ENCODE measurements at regions of chr14 and their contacts with region 1.

Region 1: GRCh38 chr14:99415496-99416281 is 65.0 kb downstream of the SETD3 start:
- DNase-seq: peak; percentile 77
- CTCF ChIP-seq: peak; percentile 80

Region 2: DNA sequence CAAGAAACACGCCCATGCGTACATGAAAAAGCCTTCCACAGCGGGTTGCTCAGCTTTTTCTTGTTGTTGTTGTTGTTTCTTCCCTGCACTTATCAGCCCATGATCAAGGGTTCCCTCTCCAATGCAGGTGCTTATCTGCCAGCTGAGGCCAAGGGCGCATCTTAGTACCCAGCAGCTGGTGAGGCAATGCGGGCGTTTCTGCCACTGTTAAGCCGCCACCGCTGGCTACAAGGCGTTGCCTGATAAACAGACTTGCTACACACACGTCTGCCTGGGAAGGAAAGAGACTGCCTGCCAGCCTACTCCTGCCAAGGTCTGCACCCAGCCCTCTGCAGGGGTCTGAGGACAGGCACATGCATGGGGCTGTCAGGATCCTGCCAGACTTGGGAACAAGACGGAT is 489.5 kb before region 1 on chr14:
- CTCF ChIA-PET with region 1: no interaction called
- POLR2A ChIA-PET with region 1: no interaction called
- DNase-seq: no peak
- CTCF ChIP-seq: no peak

Region 3: GRCh38 chr14:99320105-99320572 is 95.5 kb before region 1 on chr14:
- CTCF ChIA-PET with region 1: interaction called, 43 read pairs
- POLR2A ChIA-PET with region 1: no interaction called
- DNase-seq: peak; percentile 78
- CTCF ChIP-seq: peak; percentile 74

Region 4: GRCh38 chr14:99348816-99349614 is 66.7 kb before region 1 on chr14:
- CTCF ChIA-PET with region 1: no interaction called
- POLR2A ChIA-PET with region 1: no interaction called
- DNase-seq: no peak
- CTCF ChIP-seq: no peak

Region 5: GRCh38 chr14:99393047-99393655 is 22.5 kb before region 1 on chr14:
- CTCF ChIA-PET with region 1: interaction called, 285 read pairs
- POLR2A ChIA-PET with region 1: no interaction called
- DNase-seq: peak; percentile 67
- CTCF ChIP-seq: peak; percentile 67

Region 6: DNA sequence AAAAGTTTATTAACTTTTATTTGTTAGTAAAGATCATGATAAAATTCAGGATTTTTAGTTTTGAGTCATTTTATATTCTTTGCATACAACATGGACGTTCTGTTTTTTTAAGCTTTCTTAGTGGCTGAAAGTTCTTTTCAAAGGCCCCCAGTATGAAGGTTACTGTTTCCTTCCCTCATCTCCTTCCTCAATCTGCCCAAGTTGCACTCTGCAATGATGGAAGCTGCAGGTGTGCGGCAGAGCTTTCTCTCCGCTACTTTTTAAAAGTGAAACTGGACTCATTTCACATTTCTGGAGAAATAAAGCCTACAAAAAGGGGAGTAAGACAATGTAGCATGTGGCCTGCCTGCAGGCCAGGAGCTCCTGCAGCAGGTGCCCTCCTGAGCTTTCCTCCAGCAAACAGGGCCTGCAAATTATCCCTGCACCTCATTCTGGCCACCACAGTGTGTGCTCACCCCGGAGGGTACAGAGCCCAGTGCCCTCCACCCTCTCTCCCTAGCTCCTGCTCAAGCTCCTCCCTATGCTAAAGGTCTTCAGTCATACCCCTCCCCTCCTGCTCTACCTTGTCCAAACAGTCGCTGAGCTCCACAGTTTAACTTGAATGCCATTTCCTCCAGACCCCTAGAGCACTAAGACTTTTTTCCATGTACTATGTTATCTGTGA is 13.9 kb before region 1 on chr14:
- CTCF ChIA-PET with region 1: interaction called, 285 read pairs
- POLR2A ChIA-PET with region 1: no interaction called
- DNase-seq: no peak
- CTCF ChIP-seq: no peak

Region 7: GRCh38 chr14:99436247-99437180 is 20.8 kb after region 1 on chr14:
- CTCF ChIA-PET with region 1: interaction called, 20 read pairs
- POLR2A ChIA-PET with region 1: no interaction called
- DNase-seq: no peak
- CTCF ChIP-seq: no peak

Region 8: GRCh38 chr14:99644723-99645550 is 229.2 kb after region 1 on chr14 and contains the start of gene HHIPL1:
- CTCF ChIA-PET with region 1: no interaction called
- POLR2A ChIA-PET with region 1: no interaction called
- DNase-seq: no peak
- CTCF ChIP-seq: no peak

Measured in GM10248 (cell line).